WTC11 (cell line): ENCODE measurements at regions of chr6 and their contacts with region 1.

Region 1: GRCh38 chr6:35522660-35523658 is 10.3 kb upstream of the TULP1 start:
- DNase-seq: peak; percentile 91
- ATAC-seq: peak; percentile 87
- H3K4me3 Mint-ChIP-seq: peak overlapping the region; percentile 41
- H3K27ac Mint-ChIP-seq: no peak overlapping the region
- H3K4me1 Mint-ChIP-seq: peaks cover 19% of the 10 kb centered on the region
- H3K27me3 Mint-ChIP-seq: no peaks in the 10 kb centered on the region; the same call in 1 of the 2 replicates
- CTCF ChIP-seq: peak; percentile 99

Region 2: DNA sequence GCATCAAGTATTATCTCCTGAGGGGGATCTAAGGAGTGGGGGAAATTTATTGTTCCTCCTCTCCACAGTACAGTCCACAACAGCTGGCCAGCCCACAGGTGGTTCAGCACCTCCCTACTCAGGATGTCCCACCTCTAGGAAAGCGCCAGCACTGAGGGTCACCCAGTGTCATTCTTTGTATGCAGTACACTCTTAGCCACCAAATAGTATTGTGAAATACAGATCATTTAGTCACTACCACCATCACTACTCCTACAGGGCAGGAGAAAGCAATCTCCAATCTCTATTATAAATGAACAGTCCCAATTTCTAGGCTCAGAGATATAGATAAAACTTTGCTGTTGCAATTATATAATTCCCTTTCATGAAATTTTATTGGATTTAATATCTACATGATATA is 269.7 kb before region 1 on chr6:
- CTCF ChIA-PET with region 1: no interaction called
- POLR2A ChIA-PET with region 1: no interaction called
- DNase-seq: no peak
- ATAC-seq: no peak
- H3K4me3 Mint-ChIP-seq: no peak overlapping the region
- H3K27ac Mint-ChIP-seq: no peak overlapping the region
- H3K4me1 Mint-ChIP-seq: peaks cover 16% of the 10 kb centered on the region
- H3K27me3 Mint-ChIP-seq: no peaks in the 10 kb centered on the region
- CTCF ChIP-seq: no peak

Region 3: GRCh38 chr6:35496841-35497570 is 26.0 kb before region 1 on chr6 and contains the start of gene TEAD3:
- CTCF ChIA-PET with region 1: interaction called, 40 read pairs
- POLR2A ChIA-PET with region 1: interaction called, 4 read pairs
- DNase-seq: peak; percentile 89
- ATAC-seq: peak; percentile 38
- H3K4me3 Mint-ChIP-seq: peak within 1 kb of the TSS; percentile 78
- H3K27ac Mint-ChIP-seq: peak within 1 kb of the TSS; percentile 88
- H3K4me1 Mint-ChIP-seq: peaks cover 64% of the 10 kb centered on the region
- H3K27me3 Mint-ChIP-seq: peaks cover 23% of the 10 kb centered on the region
- CTCF ChIP-seq: no peak
- total RNA-seq, gene TEAD3: 32.0 to 34.3 TPM (median 33.9 TPM) in 3 replicates

Region 4: DNA sequence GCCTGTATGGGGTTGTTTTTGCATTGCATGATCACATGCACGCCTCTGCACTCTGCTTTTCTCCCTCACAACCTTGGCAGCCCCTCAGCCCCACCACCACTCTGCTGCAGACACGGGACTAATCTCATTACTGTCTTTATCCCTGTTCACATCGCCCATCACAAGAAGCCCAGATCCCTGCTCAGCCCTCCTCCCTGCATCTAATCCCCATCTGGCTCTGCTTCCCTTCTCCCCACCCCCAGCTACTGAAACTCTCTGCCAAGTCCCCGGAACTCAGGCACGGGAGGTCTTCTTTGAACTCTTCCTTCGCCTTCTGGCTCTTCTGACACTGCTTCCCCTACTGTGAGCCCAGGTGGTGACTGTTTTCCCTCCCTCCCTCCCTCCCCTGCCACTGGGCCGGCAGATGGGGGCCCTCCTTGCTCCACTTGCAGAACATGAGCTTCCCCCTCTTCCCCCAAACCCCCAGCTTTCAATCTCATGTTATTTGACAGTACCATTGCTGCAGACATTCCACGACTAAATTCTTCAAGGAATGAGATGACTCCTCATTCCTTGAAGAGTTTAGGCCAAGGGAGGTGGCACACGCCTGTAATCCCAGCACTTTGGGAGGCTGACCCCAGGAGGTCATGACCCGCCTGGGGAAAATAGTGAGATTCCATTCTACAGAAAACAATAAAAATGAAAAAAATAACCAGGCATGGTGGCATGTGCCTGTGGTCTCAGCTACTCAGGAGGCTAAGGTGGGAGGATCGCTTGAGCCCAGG is 11.6 kb after region 1 on chr6:
- CTCF ChIA-PET with region 1: interaction called, 88 read pairs
- POLR2A ChIA-PET with region 1: no interaction called
- DNase-seq: no peak
- ATAC-seq: no peak; the same call in 1 of the 2 replicates
- H3K4me3 Mint-ChIP-seq: no peak overlapping the region; the same call in 1 of the 2 replicates
- H3K27ac Mint-ChIP-seq: no peak overlapping the region
- H3K4me1 Mint-ChIP-seq: peaks cover 26% of the 10 kb centered on the region
- H3K27me3 Mint-ChIP-seq: no peaks in the 10 kb centered on the region; the same call in 1 of the 2 replicates
- CTCF ChIP-seq: no peak

Region 5: DNA sequence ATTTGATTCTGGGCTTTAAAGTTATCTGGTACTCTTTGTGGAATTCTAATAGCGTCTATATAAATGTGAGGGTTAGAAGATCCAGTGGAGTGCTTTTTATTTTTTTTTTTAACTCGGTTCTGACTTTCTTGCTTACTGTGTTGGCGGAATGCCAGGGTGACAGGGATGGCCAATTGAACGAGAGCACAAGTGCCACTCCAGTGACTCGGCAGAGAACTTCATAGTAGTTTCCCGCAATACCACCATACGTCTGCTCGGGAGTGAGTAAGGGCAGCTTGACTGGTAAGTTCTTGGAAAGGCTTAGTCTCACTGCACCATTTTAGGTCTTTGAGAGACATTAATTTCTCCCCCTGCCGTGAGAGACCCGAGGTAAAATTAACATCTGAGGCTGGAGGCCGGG is 39.1 kb after region 1 on chr6:
- CTCF ChIA-PET with region 1: interaction called, 147 read pairs
- POLR2A ChIA-PET with region 1: no interaction called
- DNase-seq: no peak
- ATAC-seq: no peak
- H3K4me3 Mint-ChIP-seq: no peak overlapping the region
- H3K27ac Mint-ChIP-seq: no peak overlapping the region
- H3K4me1 Mint-ChIP-seq: peaks cover 34% of the 10 kb centered on the region
- H3K27me3 Mint-ChIP-seq: no peaks in the 10 kb centered on the region
- CTCF ChIP-seq: no peak

Region 6: GRCh38 chr6:35590622-35591066 is 67.7 kb after region 1 on chr6:
- CTCF ChIA-PET with region 1: interaction called, 19 read pairs
- POLR2A ChIA-PET with region 1: no interaction called
- DNase-seq: no peak
- ATAC-seq: no peak
- H3K4me3 Mint-ChIP-seq: no peak overlapping the region
- H3K27ac Mint-ChIP-seq: peak overlapping the region; percentile 58; the same call in 1 of the 2 replicates
- H3K4me1 Mint-ChIP-seq: peaks cover 5% of the 10 kb centered on the region; the same call in 1 of the 2 replicates
- H3K27me3 Mint-ChIP-seq: no peaks in the 10 kb centered on the region
- CTCF ChIP-seq: no peak

Region 7: GRCh38 chr6:35731736-35732532 is 209.0 kb after region 1 on chr6:
- CTCF ChIA-PET with region 1: interaction called, 70 read pairs
- POLR2A ChIA-PET with region 1: no interaction called
- DNase-seq: peak; percentile 94
- ATAC-seq: peak; percentile 46
- H3K4me3 Mint-ChIP-seq: peak overlapping the region; percentile 81
- H3K27ac Mint-ChIP-seq: peak overlapping the region; percentile 93
- H3K4me1 Mint-ChIP-seq: peaks cover 57% of the 10 kb centered on the region
- H3K27me3 Mint-ChIP-seq: peaks cover 11% of the 10 kb centered on the region
- CTCF ChIP-seq: no peak